Caco-2 (cell line): ENCODE measurements at regions of chr17 and their contacts with region 1.

Region 1: GRCh38 chr17:38557836-38558727 is 47.7 kb downstream of the SRCIN1 start:
- DNase-seq: peak; percentile 93 to 95
- H3K4me3 ChIP-seq: peak overlapping the region; percentile 56
- H3K4me3 Mint-ChIP-seq: peak overlapping the region; percentile 81
- H3K27ac Mint-ChIP-seq: no peak overlapping the region
- H3K4me1 ChIP-seq: peaks cover 13% of the 10 kb centered on the region
- H3K4me1 Mint-ChIP-seq: no peaks in the 10 kb centered on the region
- H3K27me3 ChIP-seq: no peaks in the 10 kb centered on the region
- H3K27me3 Mint-ChIP-seq: no peaks in the 10 kb centered on the region
- CTCF ChIP-seq: peak; percentile 90 to 96

Region 2: DNA sequence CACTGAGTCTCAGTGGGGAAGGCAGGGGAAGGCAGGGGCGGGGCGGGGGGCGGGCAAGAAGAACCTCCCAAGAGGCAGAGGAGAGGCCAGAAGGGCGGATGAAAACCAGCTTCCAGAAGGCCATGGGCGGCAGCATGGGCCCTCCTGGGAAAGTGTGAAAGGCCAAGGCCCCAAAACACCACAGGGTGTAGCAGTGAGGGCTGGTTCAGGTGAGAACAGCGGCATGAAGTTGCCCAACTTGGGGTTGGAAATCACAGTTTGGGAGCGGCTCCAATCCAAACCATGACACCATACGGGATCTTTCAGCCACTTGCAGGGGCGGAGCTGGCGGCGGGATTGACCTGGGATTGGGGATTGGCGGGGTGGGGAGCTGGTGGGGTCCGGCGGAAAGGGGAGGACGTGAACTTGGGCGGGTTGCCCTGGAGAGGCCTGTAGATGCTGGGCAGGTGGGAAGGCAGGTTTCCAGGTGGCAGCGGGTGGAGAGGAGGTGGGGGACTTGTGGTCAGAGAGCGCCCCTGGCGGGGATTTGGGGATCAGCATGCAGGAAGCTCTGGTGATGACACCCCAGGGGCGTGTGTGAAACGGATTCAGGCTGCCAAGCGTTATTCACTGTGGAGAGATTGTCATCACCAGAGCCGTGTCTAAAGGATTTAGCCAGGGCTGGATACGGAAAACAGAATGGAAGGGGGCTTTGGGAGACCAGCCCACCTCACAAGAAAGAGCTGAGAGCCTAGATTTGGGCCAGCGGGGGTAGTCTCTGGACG is 48.9 kb before region 1 on chr17:
- CTCF ChIA-PET with region 1: interaction called, 63 read pairs
- POLR2A ChIA-PET with region 1: no interaction called
- intact Hi-C with region 1: loop called (anchors 5 kb)
- DNase-seq: peak; percentile 93 to 94
- H3K4me3 ChIP-seq: peak overlapping the region; percentile 51
- H3K4me3 Mint-ChIP-seq: peak overlapping the region; percentile 72
- H3K27ac Mint-ChIP-seq: peak overlapping the region; percentile 77
- H3K4me1 ChIP-seq: peaks cover 18% of the 10 kb centered on the region
- H3K4me1 Mint-ChIP-seq: peaks cover 14% of the 10 kb centered on the region
- H3K27me3 ChIP-seq: peaks cover 3% of the 10 kb centered on the region
- H3K27me3 Mint-ChIP-seq: peaks cover 9% of the 10 kb centered on the region
- CTCF ChIP-seq: peak; percentile 95 to 98

Region 3: GRCh38 chr17:38544839-38545209 is 13.3 kb before region 1 on chr17:
- CTCF ChIA-PET with region 1: interaction called, 17 read pairs
- POLR2A ChIA-PET with region 1: interaction called, 4 read pairs
- intact Hi-C with region 1: no loop called
- DNase-seq: no peak
- H3K4me3 ChIP-seq: no peak overlapping the region
- H3K4me3 Mint-ChIP-seq: no peak overlapping the region
- H3K27ac Mint-ChIP-seq: no peak overlapping the region
- H3K4me1 ChIP-seq: no peaks in the 10 kb centered on the region
- H3K4me1 Mint-ChIP-seq: no peaks in the 10 kb centered on the region
- H3K27me3 ChIP-seq: no peaks in the 10 kb centered on the region
- H3K27me3 Mint-ChIP-seq: no peaks in the 10 kb centered on the region
- CTCF ChIP-seq: no peak

Region 4: GRCh38 chr17:38584350-38584925 is 26.4 kb after region 1 on chr17:
- CTCF ChIA-PET with region 1: interaction called, 111 read pairs
- POLR2A ChIA-PET with region 1: no interaction called
- intact Hi-C with region 1: loop called (anchors 1 kb)
- DNase-seq: peak in 1 of 2 experiments; percentile 83
- H3K4me3 ChIP-seq: no peak overlapping the region
- H3K4me3 Mint-ChIP-seq: no peak overlapping the region
- H3K27ac Mint-ChIP-seq: peak overlapping the region; percentile 11
- H3K4me1 ChIP-seq: peaks cover 12% of the 10 kb centered on the region
- H3K4me1 Mint-ChIP-seq: peaks cover 8% of the 10 kb centered on the region
- H3K27me3 ChIP-seq: no peaks in the 10 kb centered on the region
- H3K27me3 Mint-ChIP-seq: no peaks in the 10 kb centered on the region
- CTCF ChIP-seq: peak; percentile 95 to 96

Region 5: GRCh38 chr17:38605888-38606645 is 48.0 kb after region 1 on chr17 and contains the start of gene SRCIN1:
- CTCF ChIA-PET with region 1: interaction called, 34 read pairs
- POLR2A ChIA-PET with region 1: interaction called, 6 read pairs
- intact Hi-C with region 1: loop called (anchors 2 kb)
- DNase-seq: peak; percentile 81 to 86
- H3K4me3 ChIP-seq: peak within 1 kb of the TSS; percentile 87
- H3K4me3 Mint-ChIP-seq: peak within 1 kb of the TSS; percentile 84
- H3K27ac Mint-ChIP-seq: peak within 1 kb of the TSS; percentile 91
- H3K4me1 ChIP-seq: peaks cover 32% of the 10 kb centered on the region
- H3K4me1 Mint-ChIP-seq: peaks cover 32% of the 10 kb centered on the region
- H3K27me3 ChIP-seq: no peaks in the 10 kb centered on the region
- H3K27me3 Mint-ChIP-seq: no peaks in the 10 kb centered on the region
- CTCF ChIP-seq: peak; percentile 98 to 100
- total RNA-seq, gene SRCIN1: 23.6 and 25.8 TPM in 2 replicates

Region 6: DNA sequence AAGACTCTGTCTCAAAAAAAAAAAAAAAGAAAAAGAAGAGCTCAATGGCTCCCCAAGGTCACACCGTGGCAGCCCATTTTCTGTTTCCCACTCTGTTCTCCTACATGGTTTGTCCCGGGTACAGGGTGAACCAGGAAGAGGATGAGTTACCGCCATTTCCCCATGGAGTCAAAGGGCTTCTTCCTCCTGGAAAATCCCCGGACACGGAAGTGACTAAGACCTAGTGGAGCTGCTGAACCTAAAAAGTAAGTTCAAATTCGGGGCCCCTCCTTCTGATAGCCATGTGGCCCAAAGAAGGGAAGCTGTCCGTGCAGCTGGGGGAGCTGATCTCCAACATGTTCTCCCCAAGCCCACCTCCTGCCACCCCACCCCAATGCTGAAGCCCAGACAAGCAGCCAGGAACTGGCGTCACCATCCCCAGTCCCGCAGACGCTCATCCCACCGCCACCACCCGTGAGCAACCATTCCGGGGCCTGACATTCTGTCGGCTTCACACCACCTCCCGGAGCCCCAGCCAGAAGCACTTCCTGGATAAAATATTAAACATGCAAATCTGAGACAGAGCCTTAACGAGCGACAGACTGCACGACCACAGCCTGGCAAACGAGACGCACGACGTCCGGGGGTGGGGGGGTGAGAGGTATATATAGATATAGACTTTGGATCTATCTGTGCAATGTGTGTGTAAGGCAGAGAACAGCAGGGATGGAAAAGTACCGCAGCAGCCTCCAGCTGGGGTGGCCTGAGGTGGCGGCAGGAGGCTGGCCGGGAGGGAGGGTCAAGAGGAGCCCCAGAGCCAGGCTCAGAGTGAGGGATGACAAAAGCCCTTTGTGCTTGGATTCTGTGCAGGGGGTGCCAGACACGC is 99.1 kb after region 1 on chr17:
- CTCF ChIA-PET with region 1: interaction called, 292 read pairs
- POLR2A ChIA-PET with region 1: no interaction called
- intact Hi-C with region 1: no loop called
- DNase-seq: peak; percentile 64 to 84
- H3K4me3 ChIP-seq: peak overlapping the region; percentile 33
- H3K4me3 Mint-ChIP-seq: peak overlapping the region; percentile 47
- H3K27ac Mint-ChIP-seq: peak overlapping the region; percentile 45
- H3K4me1 ChIP-seq: peaks cover 16% of the 10 kb centered on the region
- H3K4me1 Mint-ChIP-seq: peaks cover 6% of the 10 kb centered on the region
- H3K27me3 ChIP-seq: no peaks in the 10 kb centered on the region
- H3K27me3 Mint-ChIP-seq: no peaks in the 10 kb centered on the region
- CTCF ChIP-seq: no peak

Region 7: DNA sequence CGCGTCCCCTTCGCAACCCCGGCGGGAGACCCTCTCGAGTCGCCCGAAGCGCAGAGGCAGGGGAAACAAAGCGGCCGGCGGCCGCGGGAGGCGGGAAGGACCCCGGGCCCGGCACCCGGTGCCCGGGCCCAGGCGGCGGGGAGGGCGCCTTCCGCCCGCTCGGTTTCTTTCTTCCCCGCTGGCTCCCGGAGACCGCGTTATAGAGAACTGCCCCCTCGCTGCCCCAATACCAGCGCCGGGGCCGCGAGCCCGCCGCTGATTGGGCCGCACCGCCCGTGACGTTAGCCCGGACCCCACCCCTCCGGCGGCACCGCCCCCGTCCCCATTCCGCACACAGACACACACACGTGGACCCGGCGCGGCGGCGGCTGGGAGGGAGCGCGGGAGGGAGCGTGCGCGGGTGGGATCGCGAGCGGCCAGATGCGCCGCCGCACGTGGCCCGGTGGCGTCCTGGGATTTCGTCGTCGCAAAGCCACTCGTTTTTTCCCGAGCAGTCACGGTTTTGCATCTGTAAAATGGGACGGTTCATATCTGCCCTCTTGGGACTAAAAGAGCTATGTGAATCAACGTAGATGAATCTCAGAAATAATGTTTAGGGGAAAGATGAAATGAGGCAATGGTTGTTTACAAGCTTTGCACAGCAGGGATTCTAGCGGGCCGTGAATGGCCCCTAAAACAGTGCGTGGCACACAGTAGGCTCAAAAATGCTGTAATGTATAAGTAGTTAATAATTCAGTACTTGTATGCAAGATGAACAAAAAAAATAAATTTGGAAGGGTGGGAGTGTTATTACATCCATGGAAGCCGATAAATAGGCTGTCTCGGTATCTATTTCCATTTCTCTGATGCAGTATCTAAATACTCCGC is 116.9 kb after region 1 on chr17 and contains the start of gene EPOP:
- CTCF ChIA-PET with region 1: interaction called, 292 read pairs
- POLR2A ChIA-PET with region 1: no interaction called
- intact Hi-C with region 1: no loop called
- DNase-seq: peak; percentile 93 to 96
- H3K4me3 ChIP-seq: peak within 1 kb of the TSS; percentile 90
- H3K4me3 Mint-ChIP-seq: peak within 1 kb of the TSS; percentile 71
- H3K27ac Mint-ChIP-seq: peak within 1 kb of the TSS; percentile 98
- H3K4me1 ChIP-seq: peaks cover 41% of the 10 kb centered on the region
- H3K4me1 Mint-ChIP-seq: peaks cover 25% of the 10 kb centered on the region
- H3K27me3 ChIP-seq: no peaks in the 10 kb centered on the region
- H3K27me3 Mint-ChIP-seq: no peaks in the 10 kb centered on the region
- CTCF ChIP-seq: no peak
- total RNA-seq, gene EPOP: 17.1 and 19.1 TPM in 2 replicates